ENCODE measurements at regions of chr12 and their contacts with region 1.

Region 1: GRCh38 chr12:89756585-89757321 is 48.1 kb upstream of the ATP2B1 start:
- DNase-seq: no peak
- ATAC-seq: peak; percentile 74
- H3K4me3 Mint-ChIP-seq: peak overlapping the region; percentile 25
- H3K27ac Mint-ChIP-seq: peak overlapping the region; percentile 96
- H3K4me1 Mint-ChIP-seq: peaks cover 62% of the 10 kb centered on the region
- H3K27me3 Mint-ChIP-seq: no peaks in the 10 kb centered on the region
- CTCF ChIP-seq: no peak

Region 2: DNA sequence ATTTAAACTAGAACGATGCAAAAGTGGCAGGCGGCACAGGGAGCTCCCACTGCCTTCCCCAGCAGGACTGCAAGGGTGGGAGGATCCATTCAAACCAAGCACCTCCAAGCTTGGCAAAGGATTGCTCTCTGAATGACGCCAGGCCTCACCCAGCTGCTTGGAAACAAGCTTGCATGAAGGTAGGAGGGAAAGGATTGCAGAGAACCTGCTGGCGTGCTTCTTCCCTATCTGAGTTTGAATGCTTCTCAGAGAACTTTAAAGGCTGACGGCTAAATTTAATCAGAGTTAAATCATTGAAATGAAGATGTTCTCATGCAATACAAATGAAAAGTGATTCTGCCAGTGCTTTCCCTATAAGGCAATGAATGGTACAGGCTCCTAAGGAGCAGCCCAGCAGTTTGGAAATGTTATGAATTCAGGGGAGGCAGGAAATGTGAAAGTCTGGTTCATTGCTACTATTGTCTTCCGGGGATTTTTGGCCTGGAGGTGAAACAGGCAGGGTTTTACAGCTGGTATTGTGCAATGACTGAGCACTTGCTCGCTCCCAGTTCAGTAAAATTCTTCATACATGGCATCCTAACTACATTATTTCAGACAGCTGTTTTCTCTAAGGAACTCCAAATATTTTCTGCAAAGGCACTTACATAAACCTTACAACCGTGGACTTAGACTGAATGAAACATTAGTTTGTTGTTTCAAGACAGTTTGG is 372.5 kb before region 1 on chr12:
- CTCF ChIA-PET with region 1: no interaction called
- POLR2A ChIA-PET with region 1: no interaction called
- intact Hi-C with region 1: no loop called
- DNase-seq: no peak
- ATAC-seq: no peak
- H3K4me3 Mint-ChIP-seq: no peak overlapping the region
- H3K27ac Mint-ChIP-seq: no peak overlapping the region
- H3K4me1 Mint-ChIP-seq: no peaks in the 10 kb centered on the region
- H3K27me3 Mint-ChIP-seq: peaks cover 6% of the 10 kb centered on the region
- CTCF ChIP-seq: no peak

Region 3: DNA sequence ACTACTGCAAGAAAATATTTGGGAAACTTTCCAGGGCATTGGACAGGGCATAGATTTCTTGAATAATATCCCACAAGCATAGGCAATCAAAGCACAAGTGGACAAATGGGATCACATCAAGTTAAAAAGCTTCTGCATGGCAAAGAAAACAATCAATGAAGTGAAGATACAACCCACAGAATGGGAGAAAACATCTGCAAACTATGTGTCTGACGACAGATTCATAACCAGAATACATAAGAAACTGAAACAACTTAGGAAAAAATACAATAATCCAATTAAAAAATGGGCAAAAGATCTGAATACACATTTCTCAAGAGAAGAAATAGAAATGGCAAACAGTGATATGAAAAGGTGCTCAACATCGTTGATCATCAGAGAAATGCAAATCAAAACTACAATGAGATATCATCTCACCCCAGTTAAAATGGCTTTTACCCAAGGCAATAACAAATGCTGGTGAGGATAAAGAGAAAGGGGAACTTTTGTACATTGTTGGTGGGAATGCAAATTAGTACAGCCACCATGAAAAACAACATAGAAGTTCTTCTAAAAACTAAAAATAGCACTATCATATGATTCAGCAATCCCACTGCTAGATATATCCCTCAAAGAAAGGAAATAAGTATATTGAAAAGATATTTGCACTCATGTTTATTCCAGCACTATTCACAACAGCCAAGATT is 14.3 kb before region 1 on chr12:
- CTCF ChIA-PET with region 1: no interaction called
- POLR2A ChIA-PET with region 1: no interaction called
- intact Hi-C with region 1: loop called (anchors 1 kb)
- DNase-seq: no peak
- ATAC-seq: peak; percentile 84
- H3K4me3 Mint-ChIP-seq: peak overlapping the region; percentile 47
- H3K27ac Mint-ChIP-seq: peak overlapping the region; percentile 91
- H3K4me1 Mint-ChIP-seq: peaks cover 19% of the 10 kb centered on the region
- H3K27me3 Mint-ChIP-seq: no peaks in the 10 kb centered on the region
- CTCF ChIP-seq: no peak

Region 4: DNA sequence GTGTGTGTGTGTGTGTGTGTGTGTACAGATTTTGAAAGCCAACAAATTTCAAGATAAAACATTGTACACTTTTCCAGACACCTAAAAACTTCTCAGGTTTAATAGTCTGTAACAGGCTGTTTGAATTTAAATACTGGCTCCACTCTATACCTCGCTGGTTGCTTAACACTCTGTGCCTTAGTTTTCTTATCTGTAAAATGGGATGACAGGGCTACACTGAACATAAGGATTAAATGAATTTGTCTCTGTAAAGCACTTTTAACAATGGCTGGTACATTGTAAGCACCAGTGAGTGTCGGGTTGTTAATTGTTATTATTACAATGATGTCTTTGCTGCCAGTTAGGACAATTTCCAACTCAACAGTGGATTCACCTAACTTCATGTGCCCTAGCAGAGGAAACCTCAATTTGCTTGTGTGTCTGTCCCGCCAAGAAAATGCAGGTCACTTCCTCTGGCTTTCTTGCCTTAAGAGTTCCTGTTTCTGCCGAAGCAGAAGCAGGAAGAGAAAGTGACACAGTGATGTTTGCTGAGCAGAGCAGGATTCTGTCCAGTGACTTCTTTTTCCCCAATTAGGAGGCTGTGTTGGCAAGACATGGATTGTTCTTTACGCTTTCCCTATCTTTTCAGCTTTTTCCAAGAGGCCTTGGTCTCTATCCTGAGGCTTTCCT is 105.9 kb after region 1 on chr12:
- CTCF ChIA-PET with region 1: no interaction called
- POLR2A ChIA-PET with region 1: interaction called, 5 read pairs
- intact Hi-C with region 1: loop called (anchors 1 kb)
- DNase-seq: peak; percentile 30
- ATAC-seq: peak; percentile 76
- H3K4me3 Mint-ChIP-seq: peak overlapping the region; percentile 81
- H3K27ac Mint-ChIP-seq: peak overlapping the region; percentile 96
- H3K4me1 Mint-ChIP-seq: peaks cover 73% of the 10 kb centered on the region
- H3K27me3 Mint-ChIP-seq: no peaks in the 10 kb centered on the region
- CTCF ChIP-seq: no peak

Region 5: GRCh38 chr12:89960011-89960507 is 203.3 kb after region 1 on chr12:
- CTCF ChIA-PET with region 1: no interaction called
- POLR2A ChIA-PET with region 1: no interaction called
- intact Hi-C with region 1: loop called (anchors 2 kb)
- DNase-seq: no peak
- ATAC-seq: peak; percentile 92
- H3K4me3 Mint-ChIP-seq: peak overlapping the region; percentile 74
- H3K27ac Mint-ChIP-seq: peak overlapping the region; percentile 85
- H3K4me1 Mint-ChIP-seq: peaks cover 38% of the 10 kb centered on the region
- H3K27me3 Mint-ChIP-seq: no peaks in the 10 kb centered on the region
- CTCF ChIP-seq: no peak

Measured in activated B cell treated with CpG ODN at 0.5 μM for 24 hours (primary cell).